ENCODE measurements at regions of chr22 and their contacts with region 1.

Region 1: GRCh38 chr22:17501679-17502285 is 61.5 kb upstream of the SLC25A18 start:
- DNase-seq: peak in 1 of 2 donors; percentile 18
- H3K4me3 ChIP-seq: no peak overlapping the region
- CTCF ChIP-seq: no peak
- POLR2A ChIP-seq: no peak

Region 2: GRCh38 chr22:17077255-17077654 is 424.5 kb before region 1 on chr22:
- intact Hi-C with region 1: loop called (anchors 5 kb)
- DNase-seq: no peak
- H3K4me3 ChIP-seq: no peak overlapping the region
- CTCF ChIP-seq: no peak
- POLR2A ChIP-seq: no peak

Region 3: GRCh38 chr22:17171313-17172171 is 330.2 kb before region 1 on chr22:
- intact Hi-C with region 1: loop called (anchors 5 kb)
- DNase-seq: peak; percentile 72 to 96
- H3K4me3 ChIP-seq: peak overlapping the region; percentile 43
- CTCF ChIP-seq: peak in 1 of 3 donors; percentile 51
- POLR2A ChIP-seq: no peak

Region 4: GRCh38 chr22:17655289-17655688 is 153.5 kb after region 1 on chr22:
- intact Hi-C with region 1: no loop called
- DNase-seq: peak in 1 of 2 donors; percentile 9
- H3K4me3 ChIP-seq: no peak overlapping the region
- CTCF ChIP-seq: no peak
- POLR2A ChIP-seq: no peak